MCF 10A (cell line): ENCODE measurements at regions of chr11 and their contacts with region 1.

Region 1: GRCh38 chr11:83156150-83156995 is 558 bp upstream of the PCF11 start:
- DNase-seq: peak; percentile 100
- H3K4me3 Mint-ChIP-seq: peak overlapping the region; percentile 98
- H3K27ac Mint-ChIP-seq: peak overlapping the region; percentile 100
- H3K4me1 Mint-ChIP-seq: peaks cover 7% of the 10 kb centered on the region
- H3K27me3 Mint-ChIP-seq: no peaks in the 10 kb centered on the region
- CTCF ChIP-seq: no peak

Region 2: GRCh38 chr11:82474885-82475284 is 681.5 kb before region 1 on chr11:
- CTCF ChIA-PET with region 1: no interaction called
- POLR2A ChIA-PET with region 1: no interaction called
- intact Hi-C with region 1: no loop called
- DNase-seq: no peak
- H3K4me3 Mint-ChIP-seq: no peak overlapping the region
- H3K27ac Mint-ChIP-seq: no peak overlapping the region
- H3K4me1 Mint-ChIP-seq: no peaks in the 10 kb centered on the region
- H3K27me3 Mint-ChIP-seq: peaks cover 52% of the 10 kb centered on the region
- CTCF ChIP-seq: no peak

Region 3: GRCh38 chr11:82906244-82906654 is 250.1 kb before region 1 on chr11:
- CTCF ChIA-PET with region 1: interaction called, 5 read pairs
- POLR2A ChIA-PET with region 1: interaction called, 126 read pairs
- intact Hi-C with region 1: loop called (anchors 1 kb)
- DNase-seq: peak; percentile 40
- H3K4me3 Mint-ChIP-seq: peak overlapping the region; percentile 37
- H3K27ac Mint-ChIP-seq: peak overlapping the region; percentile 40
- H3K4me1 Mint-ChIP-seq: peaks cover 34% of the 10 kb centered on the region
- H3K27me3 Mint-ChIP-seq: no peaks in the 10 kb centered on the region
- CTCF ChIP-seq: peak; percentile 46

Region 4: GRCh38 chr11:83044958-83045712 is 111.2 kb before region 1 on chr11:
- CTCF ChIA-PET with region 1: interaction called, 3 read pairs
- POLR2A ChIA-PET with region 1: interaction called, 71 read pairs
- intact Hi-C with region 1: no loop called
- DNase-seq: peak; percentile 85
- H3K4me3 Mint-ChIP-seq: no peak overlapping the region
- H3K27ac Mint-ChIP-seq: peak overlapping the region; percentile 69
- H3K4me1 Mint-ChIP-seq: peaks cover 34% of the 10 kb centered on the region
- H3K27me3 Mint-ChIP-seq: no peaks in the 10 kb centered on the region
- CTCF ChIP-seq: no peak

Region 5: GRCh38 chr11:83087035-83087434 is 69.3 kb before region 1 on chr11:
- CTCF ChIA-PET with region 1: interaction called, 6 read pairs
- POLR2A ChIA-PET with region 1: interaction called, 56 read pairs
- intact Hi-C with region 1: loop called (anchors 2 kb)
- DNase-seq: peak; percentile 28
- H3K4me3 Mint-ChIP-seq: no peak overlapping the region
- H3K27ac Mint-ChIP-seq: no peak overlapping the region
- H3K4me1 Mint-ChIP-seq: peaks cover 9% of the 10 kb centered on the region
- H3K27me3 Mint-ChIP-seq: no peaks in the 10 kb centered on the region
- CTCF ChIP-seq: no peak

Region 6: GRCh38 chr11:83139310-83139709 is 17.1 kb before region 1 on chr11:
- CTCF ChIA-PET with region 1: interaction called, 5 read pairs
- POLR2A ChIA-PET with region 1: interaction called, 10 read pairs
- intact Hi-C with region 1: no loop called
- DNase-seq: no peak
- H3K4me3 Mint-ChIP-seq: no peak overlapping the region
- H3K27ac Mint-ChIP-seq: no peak overlapping the region
- H3K4me1 Mint-ChIP-seq: no peaks in the 10 kb centered on the region
- H3K27me3 Mint-ChIP-seq: no peaks in the 10 kb centered on the region
- CTCF ChIP-seq: no peak

Region 7: DNA sequence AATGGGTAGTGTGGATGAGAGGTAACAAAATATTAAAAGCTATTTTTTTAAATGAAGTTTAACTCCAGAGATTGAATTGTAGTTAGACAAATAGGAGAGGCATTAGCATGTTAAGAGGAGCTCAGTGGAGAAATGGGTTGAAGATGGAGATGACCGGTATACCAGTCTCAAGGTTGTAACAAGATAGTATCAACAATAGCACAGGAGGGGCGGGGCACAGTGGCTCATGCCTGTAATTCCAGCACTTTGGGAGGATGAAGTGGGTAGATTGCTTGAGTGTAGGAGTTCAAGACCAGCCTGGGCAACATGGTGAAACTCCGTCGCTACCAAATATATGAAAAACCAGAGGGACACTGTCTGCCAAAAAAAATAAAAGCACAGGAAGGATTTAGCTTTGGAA is 31.1 kb after region 1 on chr11:
- CTCF ChIA-PET with region 1: interaction called, 3 read pairs
- POLR2A ChIA-PET with region 1: interaction called, 52 read pairs
- intact Hi-C with region 1: loop called (anchors 2 kb)
- DNase-seq: no peak
- H3K4me3 Mint-ChIP-seq: no peak overlapping the region
- H3K27ac Mint-ChIP-seq: no peak overlapping the region
- H3K4me1 Mint-ChIP-seq: peaks cover 9% of the 10 kb centered on the region
- H3K27me3 Mint-ChIP-seq: no peaks in the 10 kb centered on the region
- CTCF ChIP-seq: no peak

Region 8: GRCh38 chr11:83285771-83286528 is 129.6 kb after region 1 on chr11 and contains the start of gene CCDC90B:
- CTCF ChIA-PET with region 1: interaction called, 3 read pairs
- POLR2A ChIA-PET with region 1: interaction called, 40 read pairs
- intact Hi-C with region 1: loop called (anchors 10 kb)
- DNase-seq: peak; percentile 97
- H3K4me3 Mint-ChIP-seq: peak within 1 kb of the TSS; percentile 90
- H3K27ac Mint-ChIP-seq: peak within 1 kb of the TSS; percentile 99
- H3K4me1 Mint-ChIP-seq: peaks cover 10% of the 10 kb centered on the region
- H3K27me3 Mint-ChIP-seq: no peaks in the 10 kb centered on the region
- CTCF ChIP-seq: peak; percentile 6
- total RNA-seq, gene CCDC90B: 69.1 and 72.9 TPM in 2 replicates